IMR-90 (cell line): ENCODE measurements at regions of chr6 and their contacts with region 1.

Region 1: DNA sequence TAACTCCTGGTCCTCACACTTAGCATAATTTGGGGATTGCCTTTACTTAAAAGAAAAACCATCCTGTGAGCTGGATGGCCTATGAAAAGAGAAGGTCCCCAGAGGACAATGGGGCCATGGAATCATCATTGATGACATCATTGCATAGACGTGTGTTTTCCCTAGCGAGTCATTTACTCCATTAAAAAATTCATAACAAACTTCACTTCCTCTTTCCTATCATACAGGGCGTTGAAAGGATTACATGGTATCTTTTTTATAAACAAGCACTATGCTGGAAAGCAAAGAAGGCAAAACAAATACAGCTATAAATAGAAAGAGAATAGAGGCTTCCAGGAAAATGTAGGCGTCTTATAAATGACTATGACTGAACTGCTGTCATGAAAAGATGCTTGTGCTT is 11.3 kb upstream of the COL12A1 start:
- DNase-seq: peak; percentile 88
- ATAC-seq: peak; percentile 90
- H3K4me3 ChIP-seq: no peak overlapping the region
- H3K27ac ChIP-seq: no peak overlapping the region
- H3K4me1 ChIP-seq: peaks cover 7% of the 10 kb centered on the region; the same call in 1 of the 2 replicates
- H3K27me3 ChIP-seq: no peaks in the 10 kb centered on the region
- CTCF ChIP-seq: no peak
- POLR2A ChIP-seq: no peak
- RAD21 ChIP-seq: no peak

Region 2: DNA sequence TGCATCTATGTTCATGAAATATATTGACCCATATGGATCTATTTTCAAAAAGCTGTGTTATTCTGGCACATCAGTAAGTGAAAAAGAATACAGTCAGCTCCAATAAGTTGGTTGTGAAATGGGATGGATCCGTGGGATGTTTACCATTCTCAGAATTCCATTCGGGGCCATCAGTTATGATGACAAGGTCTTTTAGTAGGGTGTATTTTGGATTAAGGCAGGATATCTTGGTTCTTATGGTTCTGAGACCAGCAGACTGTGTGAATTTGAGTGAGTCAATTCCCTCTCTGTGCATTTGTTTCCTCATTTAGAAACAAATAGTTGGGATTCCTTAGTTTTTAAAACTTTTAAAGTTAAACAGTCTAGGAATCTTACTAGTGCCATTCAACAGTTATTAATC is 1233.8 kb before region 1 on chr6:
- CTCF ChIA-PET with region 1: no interaction called
- POLR2A ChIA-PET with region 1: no interaction called
- dilution Hi-C with region 1: no loop called
- in situ Hi-C with region 1: loop called (anchors 5 kb)
- intact Hi-C with region 1: no loop called
- DNase-seq: peak; percentile 65
- ATAC-seq: peak; percentile 82
- H3K4me3 ChIP-seq: no peak overlapping the region
- H3K27ac ChIP-seq: no peak overlapping the region
- H3K4me1 ChIP-seq: peaks cover 10% of the 10 kb centered on the region
- H3K27me3 ChIP-seq: no peaks in the 10 kb centered on the region
- CTCF ChIP-seq: no peak
- POLR2A ChIP-seq: no peak
- RAD21 ChIP-seq: no peak

Region 3: GRCh38 chr6:74735304-74735703 is 481.9 kb before region 1 on chr6:
- CTCF ChIA-PET with region 1: no interaction called
- POLR2A ChIA-PET with region 1: no interaction called
- dilution Hi-C with region 1: no loop called
- in situ Hi-C with region 1: no loop called
- intact Hi-C with region 1: no loop called
- DNase-seq: peak; percentile 93
- ATAC-seq: peak; percentile 58
- H3K4me3 ChIP-seq: no peak overlapping the region
- H3K27ac ChIP-seq: no peak overlapping the region; the same call in 1 of the 2 replicates
- H3K4me1 ChIP-seq: peaks cover 7% of the 10 kb centered on the region
- H3K27me3 ChIP-seq: no peaks in the 10 kb centered on the region
- CTCF ChIP-seq: no peak
- POLR2A ChIP-seq: no peak
- RAD21 ChIP-seq: no peak

Region 4: DNA sequence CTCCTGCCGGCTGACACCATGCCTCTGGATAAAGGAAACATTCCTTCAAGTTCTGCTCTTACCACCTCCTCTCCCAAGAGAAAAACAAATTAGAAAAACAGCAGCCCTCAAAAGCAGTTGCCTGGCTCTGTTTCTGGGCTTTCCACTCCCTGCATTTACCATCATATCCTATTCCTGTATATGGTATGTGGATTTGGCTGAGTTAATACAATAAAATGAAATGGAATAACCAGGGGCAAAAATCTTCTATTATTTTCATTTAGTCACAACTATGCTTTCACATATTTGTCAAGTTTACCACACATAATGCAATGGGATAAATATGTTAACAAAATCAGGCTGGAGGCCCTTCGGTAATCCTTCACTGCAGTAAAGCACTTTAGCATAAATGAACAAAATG is 45.6 kb before region 1 on chr6:
- CTCF ChIA-PET with region 1: no interaction called
- POLR2A ChIA-PET with region 1: no interaction called
- dilution Hi-C with region 1: no loop called
- in situ Hi-C with region 1: no loop called
- intact Hi-C with region 1: no loop called
- DNase-seq: peak; percentile 18
- ATAC-seq: peak; percentile 28
- H3K4me3 ChIP-seq: no peak overlapping the region
- H3K27ac ChIP-seq: peak overlapping the region; percentile 55; the same call in 1 of the 2 replicates
- H3K4me1 ChIP-seq: peaks cover 9% of the 10 kb centered on the region
- H3K27me3 ChIP-seq: no peaks in the 10 kb centered on the region
- CTCF ChIP-seq: no peak
- POLR2A ChIP-seq: no peak
- RAD21 ChIP-seq: no peak